ENCODE measurements at regions of chr6 and their contacts with region 1.

Region 1: GRCh38 chr6:132084833-132085509 is 133.8 kb upstream of the CCN2 start:
- DNase-seq: no peak
- ATAC-seq: peak; percentile 77
- H3K4me3 ChIP-seq: no peak overlapping the region
- H3K27ac ChIP-seq: peak overlapping the region; percentile 83 to 97
- H3K4me1 ChIP-seq: peaks cover 0 to 4% of the 10 kb centered on the region in 2 donors
- H3K27me3 ChIP-seq: no peaks in the 10 kb centered on the region

Region 2: DNA sequence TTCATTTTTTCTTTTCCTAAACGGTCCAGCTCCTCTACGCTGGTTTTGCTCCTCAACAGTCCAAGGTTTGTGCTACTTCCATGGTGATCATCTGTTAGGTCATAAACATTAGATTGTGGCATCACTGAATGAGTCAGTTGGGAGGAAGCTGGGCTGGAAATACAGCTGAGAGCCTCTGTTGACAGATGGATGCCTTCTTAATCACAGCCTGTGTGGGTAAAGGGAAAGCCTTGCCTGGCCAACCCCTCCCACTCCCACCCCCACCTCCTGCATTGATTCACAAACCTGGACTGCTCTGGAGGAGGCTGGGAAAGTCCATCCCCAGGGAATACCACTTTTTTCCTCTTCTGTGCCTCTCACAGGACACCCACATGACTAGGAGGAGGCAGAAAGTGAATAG is 46.8 kb after region 1 on chr6:
- intact Hi-C with region 1: loop called (anchors 5 kb)
- DNase-seq: peak; percentile 70 to 81
- ATAC-seq: peak; percentile 84
- H3K4me3 ChIP-seq: no peak overlapping the region
- H3K27ac ChIP-seq: peak overlapping the region; percentile 84 to 98
- H3K4me1 ChIP-seq: peaks cover 0 to 9% of the 10 kb centered on the region in 2 donors
- H3K27me3 ChIP-seq: no peaks in the 10 kb centered on the region

Region 3: GRCh38 chr6:132147530-132148011 is 62.6 kb after region 1 on chr6:
- intact Hi-C with region 1: no loop called
- DNase-seq: no peak
- ATAC-seq: peak; percentile 44
- H3K4me3 ChIP-seq: no peak overlapping the region
- H3K27ac ChIP-seq: no peak overlapping the region
- H3K4me1 ChIP-seq: peaks cover 3 to 4% of the 10 kb centered on the region in 2 donors
- H3K27me3 ChIP-seq: no peaks in the 10 kb centered on the region

Measured in aorta (tissue), 5 donors.